ENCODE measurements at regions of chr14 and their contacts with region 1.

Region 1: GRCh38 chr14:106417224-106418049 is 891.1 kb downstream of the TMEM121 start:
- DNase-seq: peak; percentile 97
- H3K4me3 Mint-ChIP-seq: no peak overlapping the region
- H3K27ac Mint-ChIP-seq: no peak overlapping the region
- H3K4me1 Mint-ChIP-seq: peaks cover 15% of the 10 kb centered on the region
- H3K27me3 Mint-ChIP-seq: peaks cover 4% of the 10 kb centered on the region

Region 2: DNA sequence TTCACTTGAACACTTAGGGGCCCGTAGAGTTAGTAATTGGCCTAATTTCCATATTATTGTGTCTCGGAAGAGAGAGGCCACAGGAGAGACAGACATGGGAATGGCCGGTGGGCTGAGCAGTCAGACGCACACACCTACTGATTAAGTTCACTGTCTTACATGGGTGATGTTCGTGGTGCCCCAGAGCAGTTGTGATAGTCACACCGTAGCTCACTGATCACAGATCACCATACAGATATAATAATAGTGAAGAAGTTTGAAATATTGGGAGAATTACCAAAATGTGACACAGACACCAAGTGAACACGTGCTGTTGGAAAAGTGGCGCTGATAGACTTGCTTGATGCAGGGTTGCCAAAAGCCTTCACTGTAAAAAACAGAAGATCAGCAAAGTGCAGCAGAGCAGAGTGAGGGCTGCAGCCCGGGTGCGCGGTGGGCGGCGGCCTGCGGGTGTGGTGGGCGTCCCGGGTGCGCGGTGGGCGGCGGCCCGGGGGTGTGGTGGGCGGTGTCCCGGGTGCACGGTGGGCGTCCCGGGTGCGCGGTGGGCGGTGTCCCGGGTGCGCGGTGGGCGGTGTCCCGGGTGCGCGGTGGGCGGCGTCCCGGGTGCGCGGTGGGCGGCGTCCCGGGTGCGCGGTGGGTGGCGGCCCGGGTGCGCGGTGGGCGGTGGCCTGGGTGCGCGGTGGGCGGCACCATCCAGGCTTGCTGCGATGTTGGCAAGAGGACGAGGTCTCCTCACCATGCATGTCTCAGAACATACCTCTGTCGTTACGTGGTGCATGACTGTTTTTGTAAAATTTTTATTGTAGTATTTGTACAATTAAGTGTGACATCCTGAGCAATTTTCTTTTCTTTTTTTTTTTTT is 1053.4 kb before region 1 on chr14:
- CTCF ChIA-PET with region 1: no interaction called
- intact Hi-C with region 1: no loop called
- DNase-seq: no peak
- H3K4me3 Mint-ChIP-seq: no peak overlapping the region
- H3K27ac Mint-ChIP-seq: no peak overlapping the region
- H3K4me1 Mint-ChIP-seq: peaks cover 14% of the 10 kb centered on the region
- H3K27me3 Mint-ChIP-seq: peaks cover 5% of the 10 kb centered on the region

Region 3: DNA sequence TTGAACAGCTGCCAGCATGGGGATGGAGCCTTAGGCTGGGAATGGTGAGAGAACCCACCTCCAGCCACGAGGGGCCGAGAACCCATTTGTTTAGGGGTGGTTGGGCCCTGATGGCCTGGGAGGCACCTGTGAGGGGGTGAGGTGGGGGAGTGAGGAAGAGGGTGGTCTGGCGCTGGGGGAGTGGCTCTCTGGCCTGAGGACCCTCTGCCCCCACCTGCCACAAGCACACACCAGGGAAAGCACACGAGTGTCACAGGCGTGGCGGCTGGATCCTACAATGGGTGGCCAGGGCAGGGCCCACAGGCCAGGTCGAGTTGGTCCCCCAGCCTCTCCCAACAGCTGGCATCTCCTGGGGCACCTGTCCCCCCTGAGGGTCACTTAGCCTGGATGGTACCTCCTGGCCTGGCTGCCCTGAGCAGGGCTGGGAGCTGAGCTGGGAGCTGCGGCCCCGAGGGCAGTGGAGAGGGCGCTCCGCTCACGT is 550.6 kb before region 1 on chr14:
- CTCF ChIA-PET with region 1: no interaction called
- intact Hi-C with region 1: no loop called
- DNase-seq: peak; percentile 1
- H3K4me3 Mint-ChIP-seq: no peak overlapping the region
- H3K27ac Mint-ChIP-seq: no peak overlapping the region
- H3K4me1 Mint-ChIP-seq: peaks cover 11% of the 10 kb centered on the region
- H3K27me3 Mint-ChIP-seq: peaks cover 22% of the 10 kb centered on the region

Region 4: DNA sequence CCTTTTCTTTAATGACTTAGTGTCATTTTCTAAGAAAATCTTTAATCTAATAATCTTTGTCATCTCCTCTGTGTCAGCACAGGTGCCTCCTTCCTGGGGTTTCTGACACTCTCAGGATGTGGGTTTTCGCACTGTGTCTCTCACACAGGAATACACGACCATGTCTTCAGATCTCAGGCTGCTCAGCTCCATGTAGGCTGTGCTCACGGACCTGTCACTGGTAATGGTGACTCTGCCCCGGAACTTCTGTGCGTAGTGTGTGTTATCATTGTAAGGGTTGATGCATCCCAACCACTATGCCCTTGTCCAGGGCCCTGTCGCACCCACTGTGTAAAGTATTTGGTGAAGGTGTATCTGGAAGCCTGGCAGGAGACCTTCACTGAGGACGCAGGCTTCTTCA is 243.2 kb before region 1 on chr14:
- CTCF ChIA-PET with region 1: no interaction called
- intact Hi-C with region 1: loop called (anchors 10 kb)
- DNase-seq: peak; percentile 78
- H3K4me3 Mint-ChIP-seq: peak overlapping the region; percentile 25
- H3K27ac Mint-ChIP-seq: no peak overlapping the region
- H3K4me1 Mint-ChIP-seq: peaks cover 54% of the 10 kb centered on the region
- H3K27me3 Mint-ChIP-seq: no peaks in the 10 kb centered on the region

Region 5: DNA sequence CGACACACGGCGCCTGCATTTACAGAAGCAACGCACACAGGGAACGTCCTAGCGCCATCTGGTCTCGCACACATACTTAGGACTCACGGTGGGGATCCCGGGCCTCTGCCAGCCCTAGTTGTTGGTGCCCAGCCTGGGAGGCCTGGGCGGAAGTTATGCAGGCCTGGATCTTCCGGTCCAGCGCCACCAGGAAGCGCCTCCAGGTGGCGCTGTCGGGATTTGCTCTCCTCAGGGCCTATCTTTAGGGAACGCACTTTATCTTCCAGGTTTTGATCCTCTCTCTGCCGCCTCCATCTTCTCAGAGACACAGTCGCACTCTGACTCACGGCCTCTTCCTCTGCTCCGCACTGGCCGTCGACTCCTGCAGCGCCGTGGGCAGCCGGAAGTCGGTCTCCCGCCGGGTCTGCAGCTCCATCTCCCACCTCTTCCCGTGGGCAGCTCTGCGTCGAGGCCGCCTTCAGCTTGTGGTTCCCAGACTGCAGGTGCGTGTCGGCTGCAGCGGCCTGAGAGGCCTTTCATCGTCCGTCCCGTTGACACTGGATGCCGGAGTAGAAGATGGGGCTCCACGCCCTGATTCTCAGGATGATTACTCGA is 130.6 kb before region 1 on chr14:
- CTCF ChIA-PET with region 1: interaction called, 17 read pairs
- intact Hi-C with region 1: no loop called
- DNase-seq: peak; percentile 32
- H3K4me3 Mint-ChIP-seq: no peak overlapping the region
- H3K27ac Mint-ChIP-seq: no peak overlapping the region
- H3K4me1 Mint-ChIP-seq: no peaks in the 10 kb centered on the region
- H3K27me3 Mint-ChIP-seq: peaks cover 9% of the 10 kb centered on the region

Region 6: GRCh38 chr14:106372870-106373652 is 44.4 kb before region 1 on chr14:
- CTCF ChIA-PET with region 1: interaction called, 75 read pairs
- intact Hi-C with region 1: loop called (anchors 1 kb)
- DNase-seq: peak; percentile 90
- H3K4me3 Mint-ChIP-seq: peak overlapping the region; percentile 69
- H3K27ac Mint-ChIP-seq: peak overlapping the region; percentile 65
- H3K4me1 Mint-ChIP-seq: peaks cover 22% of the 10 kb centered on the region
- H3K27me3 Mint-ChIP-seq: no peaks in the 10 kb centered on the region

Region 7: GRCh38 chr14:106436310-106436905 is 19.0 kb after region 1 on chr14:
- CTCF ChIA-PET with region 1: interaction called, 28 read pairs
- intact Hi-C with region 1: no loop called
- DNase-seq: peak; percentile 75
- H3K4me3 Mint-ChIP-seq: no peak overlapping the region
- H3K27ac Mint-ChIP-seq: no peak overlapping the region
- H3K4me1 Mint-ChIP-seq: peaks cover 7% of the 10 kb centered on the region
- H3K27me3 Mint-ChIP-seq: peaks cover 10% of the 10 kb centered on the region

Region 8: GRCh38 chr14:106491851-106492250 is 74.4 kb after region 1 on chr14:
- CTCF ChIA-PET with region 1: interaction called, 14 read pairs
- intact Hi-C with region 1: no loop called
- DNase-seq: peak; percentile 43
- H3K4me3 Mint-ChIP-seq: no peak overlapping the region
- H3K27ac Mint-ChIP-seq: no peak overlapping the region
- H3K4me1 Mint-ChIP-seq: peaks cover 27% of the 10 kb centered on the region
- H3K27me3 Mint-ChIP-seq: no peaks in the 10 kb centered on the region